Common myeloid progenitor, CD34-positive (primary cell): ENCODE measurements at regions of chr19 and their contacts with region 1.

Region 1: DNA sequence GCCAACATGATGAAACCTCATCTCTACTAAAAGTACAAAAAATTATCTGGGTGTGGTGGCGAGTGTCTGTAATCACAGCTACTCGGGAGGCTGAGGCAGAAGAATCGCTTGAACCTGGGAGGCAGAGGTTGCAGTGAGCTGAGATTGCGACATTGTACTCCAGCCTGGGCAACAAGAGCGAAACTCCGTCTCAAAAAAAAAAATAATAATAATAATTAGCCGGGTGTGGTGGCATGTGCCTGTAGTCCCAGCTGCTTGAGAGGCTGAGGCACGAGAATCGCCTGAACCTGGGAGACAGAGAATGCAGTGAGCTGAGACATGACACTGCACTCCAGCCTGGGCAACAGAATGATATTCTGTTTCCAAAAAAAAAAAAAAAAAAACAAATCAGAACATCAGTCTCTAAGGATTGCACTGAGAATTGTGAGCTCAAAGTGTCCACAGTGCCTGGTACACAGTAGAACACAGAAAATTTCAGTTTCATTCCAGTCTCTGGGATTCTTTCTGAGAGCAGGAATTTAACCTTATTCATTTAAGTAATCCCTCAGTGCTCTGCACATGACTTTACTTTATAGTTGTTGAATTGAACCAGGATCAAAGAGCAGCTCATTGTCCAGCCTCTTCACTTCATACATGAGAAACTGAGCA is 26.1 kb upstream of the GATAD2A start:
- DNase-seq: no peak
- H3K4me3 ChIP-seq: no peak overlapping the region
- H3K27ac ChIP-seq: no peak overlapping the region
- H3K4me1 ChIP-seq: peaks cover 0 to 14% (median 7%) of the 10 kb centered on the region in 4 experiments
- H3K27me3 ChIP-seq: no peaks in the 10 kb centered on the region

Region 2: GRCh38 chr19:19305696-19306095 is 73.7 kb before region 1 on chr19:
- CTCF ChIA-PET with region 1: no interaction called
- POLR2A ChIA-PET with region 1: no interaction called
- DNase-seq: no peak
- H3K4me3 ChIP-seq: no peak overlapping the region
- H3K27ac ChIP-seq: no peak overlapping the region
- H3K4me1 ChIP-seq: no peaks in the 10 kb centered on the region
- H3K27me3 ChIP-seq: no peaks in the 10 kb centered on the region

Region 3: DNA sequence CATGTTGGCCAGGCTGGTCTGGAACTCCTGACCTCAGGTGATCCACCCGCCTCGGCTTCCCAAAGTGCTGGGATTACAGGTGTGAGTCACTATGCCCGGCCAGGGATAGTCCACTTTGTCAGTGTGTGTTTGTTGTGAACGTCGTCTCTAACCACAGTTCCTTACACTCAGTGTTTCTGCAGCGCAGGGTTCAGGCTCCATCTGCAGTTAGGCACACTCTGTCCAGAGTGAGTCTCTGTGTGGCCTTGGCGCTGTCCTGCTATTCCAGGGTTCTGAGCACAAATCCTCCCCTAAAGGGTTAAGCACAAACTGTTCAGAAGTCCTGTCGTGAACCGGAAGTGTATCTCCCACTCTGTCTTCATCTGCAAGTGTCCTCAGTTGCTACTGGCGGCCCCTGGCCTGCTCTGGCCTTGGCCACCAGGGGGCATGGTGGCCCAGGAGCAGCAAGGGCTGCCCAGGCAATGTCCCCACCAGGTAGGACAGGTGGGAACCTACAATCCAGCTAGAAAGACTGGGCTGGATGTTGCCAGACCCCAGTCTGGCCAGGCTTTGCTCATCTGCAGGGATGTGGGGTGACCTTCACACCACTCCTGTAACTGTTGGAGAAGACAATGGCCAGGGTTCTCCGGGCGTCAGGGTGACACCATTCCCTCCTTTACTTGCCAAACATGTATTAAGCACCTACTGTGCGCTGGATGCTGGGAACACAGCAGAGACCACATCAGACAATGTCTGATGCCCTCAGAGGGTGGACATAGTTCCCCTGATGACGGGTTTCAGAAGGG is 12.6 kb before region 1 on chr19:
- CTCF ChIA-PET with region 1: interaction called, 11 read pairs
- POLR2A ChIA-PET with region 1: no interaction called
- DNase-seq: peak; percentile 54 to 65 (median 61)
- H3K4me3 ChIP-seq: peak overlapping the region in 2 of 7 experiments; percentile 22 to 28
- H3K27ac ChIP-seq: no peak overlapping the region
- H3K4me1 ChIP-seq: peaks cover 4 to 15% (median 11%) of the 10 kb centered on the region in 4 experiments
- H3K27me3 ChIP-seq: no peaks in the 10 kb centered on the region

Region 4: DNA sequence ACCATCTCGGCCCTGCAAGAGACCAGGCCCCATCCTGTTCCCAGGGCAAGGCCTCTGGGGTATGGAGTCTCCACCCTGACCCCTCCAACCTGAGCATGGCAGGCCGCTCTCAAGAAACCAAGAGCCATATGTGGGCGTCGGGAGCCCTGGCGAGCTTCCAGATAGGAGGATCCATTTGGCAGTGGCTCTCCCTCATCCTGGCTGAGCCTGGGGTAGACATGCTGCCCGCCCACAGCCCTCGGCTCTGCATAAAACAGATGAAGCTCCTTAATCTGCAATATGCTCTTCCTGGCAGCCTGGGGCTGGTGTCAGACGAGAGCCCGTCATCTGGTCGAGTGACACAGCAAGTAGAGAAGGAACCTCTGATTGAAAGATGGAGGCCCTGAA is 278.0 kb after region 1 on chr19:
- CTCF ChIA-PET with region 1: no interaction called
- POLR2A ChIA-PET with region 1: no interaction called
- DNase-seq: no peak
- H3K4me3 ChIP-seq: no peak overlapping the region
- H3K27ac ChIP-seq: no peak overlapping the region
- H3K4me1 ChIP-seq: peaks cover under 1 to 14% (median 10%) of the 10 kb centered on the region in 4 experiments
- H3K27me3 ChIP-seq: no peaks in the 10 kb centered on the region